ENCODE measurements at regions of chr19 and their contacts with region 1.

Region 1: GRCh38 chr19:56162258-56162657 is 13.6 kb upstream of the GALP start:
- DNase-seq: no peak
- H3K4me3 ChIP-seq: no peak overlapping the region
- H3K27ac ChIP-seq: no peak overlapping the region
- H3K4me1 ChIP-seq: no peaks in the 10 kb centered on the region
- H3K27me3 ChIP-seq: no peaks in the 10 kb centered on the region
- CTCF ChIP-seq: no peak
- POLR2A ChIP-seq: no peak

Region 2: DNA sequence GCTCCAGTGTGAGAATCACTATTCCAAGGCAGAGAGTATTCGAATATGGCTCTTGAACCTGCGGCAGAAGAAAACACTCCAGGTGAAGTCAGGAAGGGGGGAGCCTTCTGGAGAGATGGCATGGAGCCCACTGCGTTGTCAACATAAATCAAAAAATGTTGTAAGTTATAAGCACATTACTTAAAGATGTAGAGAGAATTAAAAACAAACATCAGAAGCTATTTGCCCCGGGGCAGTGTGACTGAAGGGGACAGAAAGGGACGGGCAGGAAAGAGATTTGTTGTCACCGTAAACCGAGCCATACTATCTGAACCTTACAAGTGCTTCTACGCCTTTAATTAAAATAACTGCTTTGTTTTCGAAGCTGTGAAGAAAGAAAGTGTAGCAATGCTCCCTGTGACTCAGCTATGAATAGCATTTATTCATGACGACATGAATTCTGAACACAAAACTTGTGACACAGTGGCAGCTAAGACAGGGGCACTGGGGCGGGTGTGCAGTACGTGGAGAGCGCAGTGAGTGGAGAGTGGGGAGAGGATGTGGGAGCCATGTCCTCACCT is 71.2 kb before region 1 on chr19:
- intact Hi-C with region 1: loop called (anchors 5 kb)
- DNase-seq: no peak
- H3K4me3 ChIP-seq: no peak overlapping the region
- H3K27ac ChIP-seq: no peak overlapping the region
- H3K4me1 ChIP-seq: peaks cover 12% of the 10 kb centered on the region
- H3K27me3 ChIP-seq: no peaks in the 10 kb centered on the region
- CTCF ChIP-seq: no peak
- POLR2A ChIP-seq: no peak

Region 3: DNA sequence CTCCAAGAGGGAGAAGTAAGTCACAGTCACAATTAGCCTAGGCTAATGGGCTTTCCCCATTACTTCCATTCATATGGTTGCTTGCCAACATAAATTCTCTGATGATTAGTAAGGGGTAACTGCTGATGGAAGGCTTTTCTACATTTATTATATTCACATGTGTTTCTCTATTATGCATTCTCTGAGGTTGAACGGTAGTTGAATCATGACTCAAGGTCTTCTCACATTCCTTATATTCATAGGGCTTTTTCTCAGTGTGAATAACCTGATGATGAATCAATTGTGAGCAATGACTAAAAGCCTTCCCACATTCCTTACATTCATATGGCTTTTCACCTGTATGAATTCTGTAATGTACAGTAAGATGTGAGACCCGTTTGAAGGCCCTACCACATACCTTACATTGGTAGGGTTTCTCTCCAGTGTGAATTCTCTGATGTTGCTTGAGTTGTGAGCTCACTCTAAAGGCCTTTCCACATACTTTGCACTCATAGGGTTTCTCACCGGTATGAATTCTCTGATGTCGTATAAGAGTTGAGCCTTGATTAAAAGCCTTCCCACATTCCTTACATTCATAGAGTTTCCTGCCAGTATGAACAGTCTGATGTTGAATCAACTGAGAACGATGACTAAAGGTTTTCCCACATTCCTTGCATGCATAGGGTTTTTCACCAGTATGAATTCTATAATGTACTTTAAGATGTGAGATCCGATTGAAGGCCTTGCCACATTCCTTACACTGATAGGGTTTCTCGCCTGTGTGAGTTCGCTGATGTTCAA is 221.8 kb after region 1 on chr19:
- intact Hi-C with region 1: no loop called
- DNase-seq: no peak
- H3K4me3 ChIP-seq: no peak overlapping the region
- H3K27ac ChIP-seq: no peak overlapping the region
- H3K4me1 ChIP-seq: no peaks in the 10 kb centered on the region
- H3K27me3 ChIP-seq: no peaks in the 10 kb centered on the region
- CTCF ChIP-seq: no peak
- POLR2A ChIP-seq: no peak